MCF 10A (cell line): ENCODE measurements at regions of chr1 and their contacts with region 1.

Region 1: GRCh38 chr1:100895540-100896483 is at the start of gene SLC30A7:
- DNase-seq: peak; percentile 96
- H3K4me3 Mint-ChIP-seq: peak within 1 kb of the TSS; percentile 96
- H3K27ac Mint-ChIP-seq: peak within 1 kb of the TSS; percentile 99
- H3K4me1 Mint-ChIP-seq: peaks cover 6% of the 10 kb centered on the region
- H3K27me3 Mint-ChIP-seq: no peaks in the 10 kb centered on the region
- CTCF ChIP-seq: no peak
- total RNA-seq, gene SLC30A7: 55.0 and 59.5 TPM in 2 replicates

Region 2: GRCh38 chr1:99969729-99970621 is 925.8 kb before region 1 on chr1 and contains the start of gene SLC35A3:
- CTCF ChIA-PET with region 1: no interaction called
- POLR2A ChIA-PET with region 1: interaction called, 11 read pairs
- intact Hi-C with region 1: no loop called
- DNase-seq: peak; percentile 75
- H3K4me3 Mint-ChIP-seq: peak within 1 kb of the TSS; percentile 99
- H3K27ac Mint-ChIP-seq: peak within 1 kb of the TSS; percentile 92
- H3K4me1 Mint-ChIP-seq: peaks cover 6% of the 10 kb centered on the region
- H3K27me3 Mint-ChIP-seq: no peaks in the 10 kb centered on the region
- CTCF ChIP-seq: no peak
- total RNA-seq, gene SLC35A3: 15.1 and 20.7 TPM in 2 replicates

Region 3: GRCh38 chr1:100249537-100250257 is 646.1 kb before region 1 on chr1 and contains the start of gene DBT:
- CTCF ChIA-PET with region 1: no interaction called
- POLR2A ChIA-PET with region 1: interaction called, 22 read pairs
- intact Hi-C with region 1: no loop called
- DNase-seq: peak; percentile 96
- H3K4me3 Mint-ChIP-seq: no peak within 1 kb of the TSS
- H3K27ac Mint-ChIP-seq: no peak within 1 kb of the TSS
- H3K4me1 Mint-ChIP-seq: peaks cover 9% of the 10 kb centered on the region
- H3K27me3 Mint-ChIP-seq: no peaks in the 10 kb centered on the region
- CTCF ChIP-seq: no peak
- total RNA-seq, gene DBT: 9.1 and 11.0 TPM in 2 replicates

Region 4: DNA sequence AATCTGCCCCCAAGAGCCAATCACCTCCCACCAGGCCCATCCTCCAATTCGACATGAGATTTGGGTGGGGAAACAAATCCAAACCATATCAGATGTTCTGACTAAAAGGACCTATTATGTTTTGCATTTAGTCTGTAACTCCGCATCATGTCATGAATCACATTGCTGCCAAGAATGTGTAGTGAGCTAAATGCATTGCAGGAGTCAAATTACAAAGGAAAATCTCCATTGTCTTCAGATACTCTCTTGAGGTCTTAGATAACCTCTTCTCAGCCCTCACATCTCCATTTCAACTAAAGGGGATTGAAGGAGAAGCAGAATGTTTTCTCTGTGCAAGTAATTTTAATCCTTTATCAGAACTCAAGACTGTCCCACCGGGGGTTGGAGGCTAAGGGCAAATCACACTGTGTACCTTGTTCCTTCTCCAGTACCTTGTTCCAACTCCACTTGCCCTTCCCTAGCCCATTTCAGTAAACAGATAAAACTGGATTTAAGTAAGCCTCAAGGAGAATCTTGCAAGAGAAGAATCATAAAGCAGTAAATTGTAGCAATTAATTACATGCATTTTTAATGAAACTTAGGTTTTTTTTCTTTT is 35.3 kb before region 1 on chr1:
- CTCF ChIA-PET with region 1: no interaction called
- POLR2A ChIA-PET with region 1: no interaction called
- intact Hi-C with region 1: no loop called
- DNase-seq: peak; percentile 65
- H3K4me3 Mint-ChIP-seq: no peak overlapping the region
- H3K27ac Mint-ChIP-seq: no peak overlapping the region
- H3K4me1 Mint-ChIP-seq: peaks cover 2% of the 10 kb centered on the region
- H3K27me3 Mint-ChIP-seq: no peaks in the 10 kb centered on the region
- CTCF ChIP-seq: no peak

Region 5: DNA sequence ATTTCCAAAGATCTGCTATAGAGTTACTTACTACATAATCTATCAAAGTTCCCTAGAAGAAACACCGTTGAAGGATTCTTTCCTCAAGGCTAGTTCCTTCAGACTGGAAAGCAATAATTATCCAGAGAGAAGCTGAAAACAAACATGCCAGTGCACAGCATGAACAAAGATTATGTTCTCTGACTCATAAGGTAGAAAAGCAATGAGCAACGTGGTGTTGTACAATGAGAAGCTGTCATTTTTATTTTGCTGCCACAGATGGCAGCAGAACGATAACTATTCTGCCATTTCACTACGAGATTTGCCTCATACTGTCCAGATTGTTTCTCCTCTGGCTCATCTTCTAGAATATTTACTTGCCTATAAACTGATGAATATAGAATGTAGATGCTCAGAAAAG is 11.8 kb before region 1 on chr1:
- CTCF ChIA-PET with region 1: interaction called, 20 read pairs
- POLR2A ChIA-PET with region 1: interaction called, 139 read pairs
- intact Hi-C with region 1: no loop called
- DNase-seq: peak; percentile 68
- H3K4me3 Mint-ChIP-seq: no peak overlapping the region
- H3K27ac Mint-ChIP-seq: peak overlapping the region; percentile 21
- H3K4me1 Mint-ChIP-seq: peaks cover 19% of the 10 kb centered on the region
- H3K27me3 Mint-ChIP-seq: no peaks in the 10 kb centered on the region
- CTCF ChIP-seq: peak; percentile 15

Region 6: GRCh38 chr1:101002551-101002950 is 106.7 kb after region 1 on chr1:
- CTCF ChIA-PET with region 1: interaction called, 3 read pairs
- POLR2A ChIA-PET with region 1: interaction called, 20 read pairs
- intact Hi-C with region 1: no loop called
- DNase-seq: peak; percentile 73
- H3K4me3 Mint-ChIP-seq: no peak overlapping the region
- H3K27ac Mint-ChIP-seq: peak overlapping the region; percentile 39
- H3K4me1 Mint-ChIP-seq: peaks cover 31% of the 10 kb centered on the region
- H3K27me3 Mint-ChIP-seq: no peaks in the 10 kb centered on the region
- CTCF ChIP-seq: no peak

Region 7: GRCh38 chr1:101221945-101222429 is 326.2 kb after region 1 on chr1:
- CTCF ChIA-PET with region 1: no interaction called
- POLR2A ChIA-PET with region 1: no interaction called
- intact Hi-C with region 1: no loop called
- DNase-seq: no peak
- H3K4me3 Mint-ChIP-seq: no peak overlapping the region
- H3K27ac Mint-ChIP-seq: no peak overlapping the region
- H3K4me1 Mint-ChIP-seq: peaks cover 5% of the 10 kb centered on the region
- H3K27me3 Mint-ChIP-seq: no peaks in the 10 kb centered on the region
- CTCF ChIP-seq: no peak